GM12878 (cell line): ENCODE measurements at regions of chr10 and their contacts with region 1.

Region 1: GRCh38 chr10:132571650-132572535 is 34.3 kb downstream of the INPP5A start:
- DNase-seq: peak; percentile 95
- ATAC-seq: peak; percentile 67
- H3K4me3 ChIP-seq: peak overlapping the region; percentile 21; the same call in 1 of the 2 replicates
- H3K27ac ChIP-seq: peak overlapping the region; percentile 66
- H3K4me1 ChIP-seq: peaks cover 49% of the 10 kb centered on the region
- H3K27me3 ChIP-seq: no peaks in the 10 kb centered on the region
- CTCF ChIP-seq: no peak
- EP300 ChIP-seq: peak; percentile 78 to 84
- POLR2A ChIP-seq: no peak; the same call in 1 of the 2 replicates
- RAD21 ChIP-seq: no peak

Region 2: GRCh38 chr10:132458593-132459300 is 113.1 kb before region 1 on chr10:
- CTCF ChIA-PET with region 1: interaction called, 8 read pairs
- POLR2A ChIA-PET with region 1: interaction called, 3 read pairs
- RAD21 ChIA-PET with region 1: interaction called, 19 read pairs
- SMC1A ChIA-PET with region 1: interaction called, 25 read pairs
- in situ Hi-C with region 1: no loop called
- intact Hi-C with region 1: loop called (anchors 5 kb)
- DNase-seq: no peak
- ATAC-seq: peak; percentile 90
- H3K4me3 ChIP-seq: no peak overlapping the region
- H3K27ac ChIP-seq: no peak overlapping the region
- H3K4me1 ChIP-seq: no peaks in the 10 kb centered on the region
- H3K27me3 ChIP-seq: no peaks in the 10 kb centered on the region; a peak in 2 of 4 replicates
- CTCF ChIP-seq: peak; percentile 82 to 95 (median 90)
- EP300 ChIP-seq: no peak
- POLR2A ChIP-seq: no peak
- RAD21 ChIP-seq: peak; percentile 87

Region 3: DNA sequence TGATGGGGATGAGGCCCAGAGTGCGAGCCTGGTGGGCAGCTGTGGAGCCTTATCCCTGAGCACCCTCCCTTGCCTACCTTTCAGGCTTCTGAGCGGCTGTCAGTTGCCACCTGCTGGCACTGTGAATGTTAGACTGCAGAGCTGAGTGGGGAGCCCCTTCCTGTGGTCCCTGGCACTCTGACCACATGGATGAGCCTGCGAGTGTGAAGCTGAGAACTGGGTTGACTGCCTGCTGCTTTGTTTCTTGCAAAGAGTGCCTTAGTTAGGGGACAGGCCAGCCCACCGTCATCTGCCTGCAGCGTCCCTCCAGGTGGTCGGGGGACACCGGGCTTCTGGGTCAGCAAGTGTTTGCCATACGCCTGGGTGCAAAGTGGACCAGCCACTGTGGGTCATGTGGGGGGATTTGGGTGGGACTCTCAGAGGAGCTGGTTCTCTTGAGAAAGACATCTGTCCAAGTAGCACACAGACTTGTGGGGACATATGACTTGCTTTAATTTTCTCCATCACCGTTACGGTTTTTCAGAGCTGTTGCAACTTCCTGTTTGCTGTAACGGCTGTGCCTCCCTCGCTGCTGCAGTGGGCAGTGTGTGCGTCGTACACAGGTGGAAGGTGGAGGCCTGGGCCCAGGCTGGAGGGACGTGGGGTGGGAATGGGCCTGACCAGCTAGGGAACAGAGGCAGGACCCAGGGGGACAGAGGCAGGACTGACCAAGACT is 20.6 kb before region 1 on chr10:
- CTCF ChIA-PET with region 1: interaction called, 12 read pairs
- POLR2A ChIA-PET with region 1: interaction called, 3 read pairs
- RAD21 ChIA-PET with region 1: interaction called, 19 read pairs
- SMC1A ChIA-PET with region 1: interaction called, 6 read pairs
- in situ Hi-C with region 1: no loop called
- intact Hi-C with region 1: no loop called
- DNase-seq: no peak
- ATAC-seq: peak; percentile 77
- H3K4me3 ChIP-seq: no peak overlapping the region
- H3K27ac ChIP-seq: no peak overlapping the region; the same call in 1 of the 2 replicates
- H3K4me1 ChIP-seq: peaks cover 30% of the 10 kb centered on the region
- H3K27me3 ChIP-seq: no peaks in the 10 kb centered on the region; a peak in 1 of 4 replicates
- CTCF ChIP-seq: peak in 1 of 3 experiments; percentile 8; a peak in 2 of 6 replicates
- EP300 ChIP-seq: no peak
- POLR2A ChIP-seq: peak; percentile 70
- RAD21 ChIP-seq: peak; percentile 23; the same call in 1 of the 2 replicates

Region 4: GRCh38 chr10:132588301-132589013 is 16.6 kb after region 1 on chr10:
- CTCF ChIA-PET with region 1: interaction called, 17 read pairs
- POLR2A ChIA-PET with region 1: interaction called, 26 read pairs
- RAD21 ChIA-PET with region 1: interaction called, 84 read pairs
- SMC1A ChIA-PET with region 1: interaction called, 62 read pairs
- in situ Hi-C with region 1: no loop called
- intact Hi-C with region 1: loop called (anchors 2 kb)
- DNase-seq: no peak
- ATAC-seq: peak; percentile 73
- H3K4me3 ChIP-seq: peak overlapping the region; percentile 28; the same call in 1 of the 2 replicates
- H3K27ac ChIP-seq: peak overlapping the region; percentile 9
- H3K4me1 ChIP-seq: peaks cover 19% of the 10 kb centered on the region
- H3K27me3 ChIP-seq: no peaks in the 10 kb centered on the region
- CTCF ChIP-seq: no peak
- EP300 ChIP-seq: no peak
- POLR2A ChIP-seq: no peak
- RAD21 ChIP-seq: no peak

Region 5: GRCh38 chr10:132637477-132638129 is 65.7 kb after region 1 on chr10:
- CTCF ChIA-PET with region 1: interaction called, 3 read pairs
- POLR2A ChIA-PET with region 1: no interaction called
- RAD21 ChIA-PET with region 1: interaction called, 10 read pairs
- SMC1A ChIA-PET with region 1: interaction called, 10 read pairs
- in situ Hi-C with region 1: no loop called
- intact Hi-C with region 1: loop called (anchors 1 kb)
- DNase-seq: peak; percentile 43
- ATAC-seq: peak; percentile 89
- H3K4me3 ChIP-seq: no peak overlapping the region
- H3K27ac ChIP-seq: no peak overlapping the region
- H3K4me1 ChIP-seq: no peaks in the 10 kb centered on the region
- H3K27me3 ChIP-seq: no peaks in the 10 kb centered on the region
- CTCF ChIP-seq: peak; percentile 58 to 86 (median 67); a peak in 5 of 6 replicates
- EP300 ChIP-seq: no peak
- POLR2A ChIP-seq: no peak
- RAD21 ChIP-seq: peak; percentile 97